KBM-7 (cell line): ENCODE measurements at regions of chr15 and their contacts with region 1.

Region 1: GRCh38 chr15:88484682-88485331 is 17.3 kb downstream of the MRPS11 start:
- DNase-seq: no peak

Region 2: DNA sequence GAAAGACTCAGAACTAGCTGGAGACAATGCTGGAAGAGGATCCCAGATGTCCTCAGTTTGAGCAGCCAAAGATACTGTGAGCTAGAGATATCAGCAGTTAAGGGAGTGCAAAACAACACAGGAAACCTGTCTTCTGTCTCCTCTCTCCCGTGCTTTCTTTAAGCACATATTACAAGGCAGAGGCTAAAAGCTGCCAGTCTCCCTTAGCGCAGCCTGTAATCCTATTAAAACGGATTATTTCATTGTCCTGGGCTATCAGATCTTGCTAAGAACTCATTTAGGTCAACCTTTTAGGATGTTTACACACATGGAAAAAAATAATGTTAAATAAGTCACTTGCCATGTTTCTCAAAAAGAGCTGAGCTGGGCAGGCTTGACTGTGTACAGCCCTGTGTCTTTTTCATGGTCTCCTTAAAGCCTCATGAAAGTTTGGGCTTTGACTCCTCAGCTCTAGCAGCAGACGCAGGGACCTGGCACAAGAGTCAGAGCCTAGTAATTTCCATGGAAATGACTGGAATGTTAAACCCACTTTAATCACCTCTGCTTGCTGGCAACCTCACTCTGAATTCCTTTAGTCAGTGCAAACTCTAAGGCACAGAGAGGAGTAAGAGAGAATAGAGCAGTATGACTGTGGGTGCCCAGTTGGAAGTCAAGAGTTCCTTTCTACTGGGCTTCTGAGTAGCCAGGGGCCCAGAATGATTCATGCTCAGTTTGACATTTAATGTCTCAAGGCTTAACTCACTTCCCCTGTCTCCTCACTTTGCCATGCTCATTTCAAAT is 720.2 kb before region 1 on chr15:
- in situ Hi-C with region 1: no loop called
- DNase-seq: no peak

Region 3: DNA sequence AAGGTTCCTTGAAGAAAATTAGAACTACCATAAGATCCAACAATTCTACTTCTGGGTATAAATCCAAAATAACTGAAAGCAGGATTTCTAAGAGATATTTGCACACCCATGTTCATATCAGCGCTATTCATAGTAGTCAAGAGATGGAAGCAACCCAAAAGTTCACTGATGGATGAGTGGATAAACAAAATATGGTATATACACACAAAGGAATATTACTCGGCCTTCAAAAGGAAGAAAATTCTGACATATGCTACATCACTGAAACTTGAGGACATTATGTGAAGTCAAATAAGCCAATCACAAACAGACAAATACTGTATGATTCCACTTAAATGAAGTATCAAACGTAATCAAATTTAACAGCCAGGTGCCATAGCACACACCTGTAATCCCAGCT is 48.6 kb after region 1 on chr15:
- in situ Hi-C with region 1: loop called (anchors 5 kb)
- DNase-seq: no peak

Region 4: DNA sequence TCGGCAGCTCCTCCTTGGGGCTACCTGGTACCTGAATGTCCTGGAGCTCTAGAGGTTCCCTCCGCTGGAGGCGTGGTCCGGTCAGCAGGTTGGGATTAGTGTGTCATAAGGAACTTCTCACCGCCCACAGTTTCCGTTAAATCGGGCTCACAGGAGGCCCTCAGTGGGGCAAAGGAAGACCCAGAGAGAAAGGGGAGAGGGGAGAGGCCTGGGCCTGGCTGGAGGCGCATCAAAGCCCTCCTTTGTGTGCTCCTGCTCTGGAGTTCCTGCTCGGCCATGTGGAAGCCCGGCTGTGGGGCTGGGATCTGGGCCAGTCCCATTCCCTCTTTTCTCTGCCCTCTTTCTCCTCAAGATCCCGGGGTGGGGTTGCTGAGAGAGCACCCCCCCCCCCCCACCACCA is 736.7 kb after region 1 on chr15 and contains the start of gene RLBP1:
- in situ Hi-C with region 1: no loop called
- DNase-seq: no peak